MCF 10A (cell line): ENCODE measurements at regions of chr4 and their contacts with region 1.

Region 1: GRCh38 chr4:142984871-142985585 is 138.9 kb upstream of the INPP4B start:
- DNase-seq: peak; percentile 55
- H3K4me3 Mint-ChIP-seq: no peak overlapping the region
- H3K27ac Mint-ChIP-seq: no peak overlapping the region
- H3K4me1 Mint-ChIP-seq: no peaks in the 10 kb centered on the region
- H3K27me3 Mint-ChIP-seq: peaks cover 92% of the 10 kb centered on the region
- CTCF ChIP-seq: peak; percentile 0

Region 2: DNA sequence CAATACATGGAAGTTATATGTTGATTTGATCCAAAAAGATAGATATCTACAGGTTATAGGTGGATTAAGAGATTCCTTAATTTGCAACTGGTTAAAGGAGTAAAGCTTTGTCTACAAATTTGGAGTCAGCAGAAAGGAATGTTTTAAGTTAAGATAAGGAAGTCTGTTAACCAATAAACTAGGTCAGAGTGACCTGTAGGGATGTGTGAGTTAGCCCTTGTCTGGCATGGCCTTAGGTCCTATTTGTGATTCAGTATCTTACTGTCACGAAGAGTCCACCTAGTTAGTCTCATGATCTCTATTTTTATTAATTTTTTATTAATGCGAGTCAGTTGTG is 369.7 kb before region 1 on chr4:
- CTCF ChIA-PET with region 1: no interaction called
- POLR2A ChIA-PET with region 1: no interaction called
- intact Hi-C with region 1: no loop called
- DNase-seq: peak; percentile 1
- H3K4me3 Mint-ChIP-seq: no peak overlapping the region
- H3K27ac Mint-ChIP-seq: no peak overlapping the region
- H3K4me1 Mint-ChIP-seq: peaks cover 12% of the 10 kb centered on the region
- H3K27me3 Mint-ChIP-seq: no peaks in the 10 kb centered on the region
- CTCF ChIP-seq: no peak

Region 3: GRCh38 chr4:142883040-142883832 is 101.8 kb before region 1 on chr4:
- CTCF ChIA-PET with region 1: no interaction called
- POLR2A ChIA-PET with region 1: no interaction called
- intact Hi-C with region 1: loop called (anchors 10 kb)
- DNase-seq: peak; percentile 26
- H3K4me3 Mint-ChIP-seq: no peak overlapping the region
- H3K27ac Mint-ChIP-seq: no peak overlapping the region
- H3K4me1 Mint-ChIP-seq: no peaks in the 10 kb centered on the region
- H3K27me3 Mint-ChIP-seq: no peaks in the 10 kb centered on the region
- CTCF ChIP-seq: no peak

Region 4: DNA sequence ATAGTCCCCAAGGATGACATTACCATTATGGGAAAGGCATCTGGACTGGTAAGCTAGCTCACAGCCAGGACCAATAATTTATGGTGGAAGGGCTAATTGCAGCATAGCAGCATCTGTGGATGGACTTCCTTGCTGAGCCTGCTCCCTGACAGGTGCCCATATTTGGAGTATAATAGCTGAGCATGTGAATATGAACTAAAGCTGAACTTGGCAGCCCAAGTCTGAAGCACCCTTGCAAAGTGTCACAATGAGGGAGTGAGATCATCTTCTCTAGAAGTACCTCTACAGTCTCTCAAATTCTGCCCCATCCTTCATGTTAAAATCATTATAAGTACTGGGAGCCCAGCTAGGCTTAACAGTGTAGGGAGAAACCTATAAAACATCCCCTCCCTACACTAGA is 10.7 kb before region 1 on chr4:
- CTCF ChIA-PET with region 1: interaction called, 10 read pairs
- POLR2A ChIA-PET with region 1: no interaction called
- intact Hi-C with region 1: no loop called
- DNase-seq: no peak
- H3K4me3 Mint-ChIP-seq: no peak overlapping the region
- H3K27ac Mint-ChIP-seq: no peak overlapping the region
- H3K4me1 Mint-ChIP-seq: no peaks in the 10 kb centered on the region
- H3K27me3 Mint-ChIP-seq: peaks cover 19% of the 10 kb centered on the region
- CTCF ChIP-seq: no peak

Region 5: DNA sequence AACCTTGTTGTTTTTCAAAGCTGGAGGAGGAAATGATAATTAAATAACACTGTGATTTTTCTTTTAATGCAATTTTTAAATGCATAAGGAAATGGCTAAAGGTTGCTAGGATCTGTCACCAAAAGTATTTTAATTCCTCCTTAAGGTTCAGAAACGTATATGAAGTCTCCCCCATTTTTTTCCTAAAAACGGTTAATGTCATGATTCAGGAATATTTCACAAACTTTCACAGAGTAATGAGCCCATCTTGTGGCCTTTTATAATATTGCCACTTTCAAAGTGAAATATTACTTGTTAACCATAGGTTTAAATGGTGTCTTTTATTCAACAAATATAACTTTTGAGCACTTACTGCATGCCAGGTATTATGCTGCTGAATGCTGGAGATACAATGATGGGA is 100.2 kb after region 1 on chr4:
- CTCF ChIA-PET with region 1: interaction called, 11 read pairs
- POLR2A ChIA-PET with region 1: no interaction called
- intact Hi-C with region 1: loop called (anchors 2 kb)
- DNase-seq: peak; percentile 17
- H3K4me3 Mint-ChIP-seq: no peak overlapping the region
- H3K27ac Mint-ChIP-seq: no peak overlapping the region
- H3K4me1 Mint-ChIP-seq: peaks cover 14% of the 10 kb centered on the region
- H3K27me3 Mint-ChIP-seq: no peaks in the 10 kb centered on the region
- CTCF ChIP-seq: peak; percentile 31

Region 6: GRCh38 chr4:143184217-143185116 is 199.4 kb after region 1 on chr4 and contains the start of gene USP38:
- CTCF ChIA-PET with region 1: interaction called, 4 read pairs
- POLR2A ChIA-PET with region 1: no interaction called
- intact Hi-C with region 1: loop called (anchors 2 kb)
- DNase-seq: peak; percentile 96
- H3K4me3 Mint-ChIP-seq: peak within 1 kb of the TSS; percentile 79
- H3K27ac Mint-ChIP-seq: peak within 1 kb of the TSS; percentile 91
- H3K4me1 Mint-ChIP-seq: peaks cover 37% of the 10 kb centered on the region
- H3K27me3 Mint-ChIP-seq: no peaks in the 10 kb centered on the region
- CTCF ChIP-seq: no peak
- total RNA-seq, gene USP38: 17.6 and 19.4 TPM in 2 replicates

Region 7: GRCh38 chr4:144223661-144224060 is 1238.6 kb after region 1 on chr4:
- CTCF ChIA-PET with region 1: no interaction called
- POLR2A ChIA-PET with region 1: no interaction called
- intact Hi-C with region 1: no loop called
- DNase-seq: no peak
- H3K4me3 Mint-ChIP-seq: no peak overlapping the region
- H3K27ac Mint-ChIP-seq: no peak overlapping the region
- H3K4me1 Mint-ChIP-seq: no peaks in the 10 kb centered on the region
- H3K27me3 Mint-ChIP-seq: no peaks in the 10 kb centered on the region
- CTCF ChIP-seq: no peak